PC-3 (cell line): ENCODE measurements at regions of chr11 and their contacts with region 1.

Region 1: DNA sequence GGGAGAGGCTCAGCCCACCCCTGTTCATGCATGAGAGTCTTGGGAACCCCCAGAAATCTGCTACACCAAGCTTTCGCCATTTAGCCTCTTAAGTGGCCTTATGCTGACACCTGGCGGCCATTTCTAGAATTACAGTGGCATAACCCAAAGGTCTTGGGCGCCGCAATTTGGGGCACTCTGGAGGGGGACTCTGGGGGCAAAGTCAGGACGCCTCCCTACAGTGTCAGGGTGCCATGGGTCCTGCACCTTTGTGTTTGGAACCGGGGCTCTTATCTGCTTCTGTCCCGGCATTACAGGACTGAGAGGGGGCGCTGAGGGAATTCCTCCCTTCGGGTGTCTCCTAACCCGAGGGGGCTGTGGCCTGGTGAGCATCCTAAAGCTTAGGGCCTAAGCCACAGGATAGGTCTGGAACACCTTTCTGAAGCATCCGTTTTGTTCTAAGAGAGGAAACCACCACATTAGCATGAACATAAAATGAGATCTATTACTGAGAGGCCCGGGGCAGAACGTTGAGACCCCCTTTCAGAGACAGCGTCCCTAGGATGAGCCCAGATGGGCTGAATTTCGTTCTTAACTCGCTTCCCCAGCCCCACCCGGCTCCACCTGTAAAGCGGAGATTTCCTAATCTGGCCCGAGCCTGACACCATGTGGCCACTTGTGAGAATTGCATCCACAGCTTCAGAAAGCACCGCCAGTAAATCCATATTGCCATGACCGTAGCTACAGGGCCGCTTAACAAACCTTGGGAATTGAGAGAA is 9.3 kb downstream of the INS start:
- DNase-seq: peak; percentile 85
- ATAC-seq: peak; percentile 37
- H3K4me3 ChIP-seq: peak overlapping the region; percentile 33; the same call in 1 of the 2 replicates
- H3K27ac ChIP-seq: no peak overlapping the region
- H3K4me1 ChIP-seq: peaks cover 10% of the 10 kb centered on the region
- H3K27me3 ChIP-seq: peaks cover 17% of the 10 kb centered on the region
- CTCF ChIP-seq: peak; percentile 66

Region 2: DNA sequence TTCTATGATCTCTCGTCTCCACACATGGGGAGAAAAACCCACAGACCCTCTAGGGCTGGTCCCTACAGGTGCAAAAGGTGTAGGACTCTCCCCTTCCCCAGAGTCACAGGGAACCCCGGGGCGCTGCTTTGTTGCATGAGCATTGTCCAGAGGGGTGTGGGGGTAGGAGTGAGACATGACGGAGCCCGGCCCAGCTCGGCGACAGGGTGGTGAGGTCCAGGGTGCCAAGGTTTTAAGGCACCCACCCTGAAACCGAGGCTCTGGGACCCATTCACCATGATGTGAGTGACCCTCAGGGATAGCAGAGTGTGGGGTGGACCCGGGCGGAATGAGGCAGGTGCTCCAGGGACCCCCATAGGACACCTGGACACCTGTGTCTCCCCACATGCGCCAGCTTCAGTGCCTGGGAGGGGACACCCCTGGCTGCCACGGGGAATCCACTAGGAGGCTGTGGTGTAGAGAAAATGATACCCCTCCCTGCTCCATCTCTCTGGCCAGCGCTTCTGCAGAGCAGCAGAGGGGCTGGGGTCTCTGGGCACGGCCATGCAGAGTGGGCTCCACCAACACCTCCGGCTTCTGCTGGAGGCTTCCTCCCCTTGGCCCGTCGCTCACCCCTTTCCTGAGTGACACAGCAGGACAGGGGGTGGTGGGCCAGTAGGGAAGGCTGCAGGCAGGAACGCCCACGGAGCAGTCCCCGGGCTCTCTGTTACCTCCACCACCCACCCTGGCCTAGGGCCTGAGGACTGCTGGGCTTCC is 506.9 kb before region 1 on chr11:
- CTCF ChIA-PET with region 1: no interaction called
- POLR2A ChIA-PET with region 1: no interaction called
- intact Hi-C with region 1: no loop called
- DNase-seq: no peak
- ATAC-seq: no peak
- H3K4me3 ChIP-seq: no peak overlapping the region
- H3K27ac ChIP-seq: no peak overlapping the region
- H3K4me1 ChIP-seq: no peaks in the 10 kb centered on the region
- H3K27me3 ChIP-seq: 0 out of 2 replicates have a peak, but pooled peaks cover 9% of the 10 kb centered on the region
- CTCF ChIP-seq: no peak

Region 3: DNA sequence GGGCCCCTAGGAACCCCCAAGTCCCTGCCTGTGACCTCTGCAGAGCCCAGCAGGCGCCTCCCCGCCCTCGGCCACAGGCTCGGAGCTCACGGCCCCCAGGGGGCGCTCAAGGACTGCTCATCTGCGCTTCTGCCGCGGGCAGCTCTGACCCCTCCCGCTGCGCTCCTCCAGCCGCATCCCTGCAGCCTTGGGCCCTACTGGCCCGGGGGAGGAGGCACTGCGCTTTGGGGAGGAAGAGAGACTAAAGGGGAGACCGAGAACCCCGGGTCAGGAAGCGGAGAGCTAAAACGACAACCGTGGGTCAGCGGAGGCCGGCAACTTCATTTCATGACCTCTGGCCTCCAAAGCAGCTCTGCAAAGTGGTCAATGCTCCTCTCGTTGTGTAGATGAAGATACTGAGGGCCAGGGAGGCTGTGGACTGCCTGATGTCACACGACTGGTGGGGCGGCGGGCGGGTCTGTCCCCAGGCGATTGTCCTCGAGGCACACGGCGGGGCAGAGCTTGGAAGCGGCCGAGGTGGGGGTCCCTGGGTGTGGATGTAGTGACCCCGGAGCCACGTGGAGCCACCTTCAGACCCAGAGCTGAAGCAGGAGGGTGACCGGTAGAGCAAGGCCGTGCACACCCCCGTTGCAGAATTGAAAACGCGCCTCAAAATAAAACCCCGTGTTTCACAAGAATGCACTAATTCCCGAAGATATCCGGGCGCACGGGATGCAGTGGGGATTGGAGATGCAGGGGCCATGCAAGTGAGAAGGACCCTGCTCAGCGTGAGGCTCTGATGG is 457.4 kb before region 1 on chr11:
- CTCF ChIA-PET with region 1: interaction called, 12 read pairs
- POLR2A ChIA-PET with region 1: no interaction called
- intact Hi-C with region 1: loop called (anchors 1 kb)
- DNase-seq: peak; percentile 86
- ATAC-seq: peak; percentile 90
- H3K4me3 ChIP-seq: peak overlapping the region; percentile 63; the same call in 1 of the 2 replicates
- H3K27ac ChIP-seq: no peak overlapping the region
- H3K4me1 ChIP-seq: peaks cover 7% of the 10 kb centered on the region; the same call in 1 of the 2 replicates
- H3K27me3 ChIP-seq: no peaks in the 10 kb centered on the region
- CTCF ChIP-seq: peak; percentile 83

Region 4: GRCh38 chr11:1837171-1838076 is 314.3 kb before region 1 on chr11:
- CTCF ChIA-PET with region 1: interaction called, 20 read pairs
- POLR2A ChIA-PET with region 1: interaction called, 5 read pairs
- intact Hi-C with region 1: loop called (anchors 10 kb)
- DNase-seq: peak; percentile 33
- ATAC-seq: 0 out of 2 replicates have a peak, but pooled peaks have one; percentile 11
- H3K4me3 ChIP-seq: no peak overlapping the region
- H3K27ac ChIP-seq: no peak overlapping the region
- H3K4me1 ChIP-seq: peaks cover 24% of the 10 kb centered on the region
- H3K27me3 ChIP-seq: no peaks in the 10 kb centered on the region
- CTCF ChIP-seq: peak; percentile 75

Region 5: GRCh38 chr11:1882519-1883238 is 269.0 kb before region 1 on chr11:
- CTCF ChIA-PET with region 1: interaction called, 28 read pairs
- POLR2A ChIA-PET with region 1: no interaction called
- intact Hi-C with region 1: no loop called
- DNase-seq: peak; percentile 77
- ATAC-seq: peak; percentile 96
- H3K4me3 ChIP-seq: no peak overlapping the region
- H3K27ac ChIP-seq: no peak overlapping the region
- H3K4me1 ChIP-seq: no peaks in the 10 kb centered on the region
- H3K27me3 ChIP-seq: no peaks in the 10 kb centered on the region; the same call in 1 of the 2 replicates
- CTCF ChIP-seq: peak; percentile 83

Region 6: GRCh38 chr11:2077061-2077802 is 74.4 kb before region 1 on chr11:
- CTCF ChIA-PET with region 1: interaction called, 6 read pairs
- POLR2A ChIA-PET with region 1: no interaction called
- intact Hi-C with region 1: loop called (anchors 2 kb)
- DNase-seq: peak; percentile 91
- ATAC-seq: peak; percentile 96
- H3K4me3 ChIP-seq: peak overlapping the region; percentile 50
- H3K27ac ChIP-seq: peak overlapping the region; percentile 97
- H3K4me1 ChIP-seq: peaks cover 27% of the 10 kb centered on the region
- H3K27me3 ChIP-seq: no peaks in the 10 kb centered on the region
- CTCF ChIP-seq: no peak

Region 7: GRCh38 chr11:2420502-2421225 is 269.0 kb after region 1 on chr11:
- CTCF ChIA-PET with region 1: no interaction called
- POLR2A ChIA-PET with region 1: no interaction called
- intact Hi-C with region 1: no loop called
- DNase-seq: peak; percentile 77
- ATAC-seq: peak; percentile 95
- H3K4me3 ChIP-seq: no peak overlapping the region
- H3K27ac ChIP-seq: no peak overlapping the region
- H3K4me1 ChIP-seq: 0 out of 2 replicates have a peak, but pooled peaks cover 3% of the 10 kb centered on the region
- H3K27me3 ChIP-seq: no peaks in the 10 kb centered on the region
- CTCF ChIP-seq: peak; percentile 88